HCT116 (cell line): ENCODE measurements at regions of chr4 and their contacts with region 1.

Region 1: DNA sequence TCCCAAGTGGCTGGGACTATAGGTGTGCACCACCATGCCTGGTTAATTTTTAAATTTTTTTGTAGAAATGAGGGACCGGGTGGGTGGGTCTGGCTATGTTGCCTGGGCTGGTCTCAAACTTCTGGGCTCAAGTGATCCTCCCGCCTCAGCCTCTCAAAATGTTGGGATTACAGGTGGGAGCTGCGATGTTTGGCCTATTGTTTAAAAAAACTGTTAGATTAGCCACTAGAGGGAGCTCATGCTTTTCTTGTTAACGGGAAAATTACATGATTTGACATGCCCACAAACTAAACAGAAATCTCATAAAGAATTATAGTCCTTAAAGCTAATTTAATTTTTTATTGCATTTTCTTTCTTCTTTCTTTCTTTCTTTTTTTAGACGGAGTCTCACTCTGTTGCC is 5.0 kb upstream of the SDAD1 start:
- DNase-seq: peak; percentile 42
- ATAC-seq: peak; percentile 48
- H3K4me3 ChIP-seq: no peak overlapping the region
- H3K27ac ChIP-seq: no peak overlapping the region
- H3K4me1 ChIP-seq: peaks cover 0 to 6% of the 10 kb centered on the region in 2 experiments; a peak in 2 of 4 replicates
- H3K27me3 ChIP-seq: no peaks in the 10 kb centered on the region
- CTCF ChIP-seq: peak; percentile 37 to 70 (median 60); a peak in 5 of 6 replicates
- POLR2A ChIP-seq: no peak
- RAD21 ChIP-seq: peak; percentile 80

Region 2: DNA sequence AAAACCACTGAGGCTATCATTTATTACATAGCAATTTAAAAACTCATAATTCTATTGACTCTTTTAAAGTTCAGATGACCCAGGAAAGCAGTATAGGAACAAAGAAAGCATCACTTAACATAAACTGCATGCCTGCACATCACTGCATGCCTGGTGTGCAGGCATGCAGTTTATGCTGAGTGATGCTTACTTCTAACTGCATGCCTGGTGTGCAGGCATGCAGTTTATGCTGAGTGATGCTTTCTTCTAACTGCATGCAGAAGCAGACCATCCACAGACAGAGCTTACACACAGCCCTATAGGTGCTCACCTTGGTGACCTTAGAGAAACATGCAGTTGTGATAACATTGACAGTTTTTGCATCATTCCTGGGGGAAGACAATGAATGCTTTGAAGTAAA is 22.0 kb before region 1 on chr4:
- CTCF ChIA-PET with region 1: no interaction called
- POLR2A ChIA-PET with region 1: no interaction called
- RAD21 ChIA-PET with region 1: no interaction called
- intact Hi-C with region 1: no loop called
- DNase-seq: no peak
- ATAC-seq: no peak
- H3K4me3 ChIP-seq: no peak overlapping the region
- H3K27ac ChIP-seq: no peak overlapping the region
- H3K4me1 ChIP-seq: no peaks in the 10 kb centered on the region
- H3K27me3 ChIP-seq: no peaks in the 10 kb centered on the region
- CTCF ChIP-seq: no peak
- POLR2A ChIP-seq: no peak
- RAD21 ChIP-seq: no peak

Region 3: DNA sequence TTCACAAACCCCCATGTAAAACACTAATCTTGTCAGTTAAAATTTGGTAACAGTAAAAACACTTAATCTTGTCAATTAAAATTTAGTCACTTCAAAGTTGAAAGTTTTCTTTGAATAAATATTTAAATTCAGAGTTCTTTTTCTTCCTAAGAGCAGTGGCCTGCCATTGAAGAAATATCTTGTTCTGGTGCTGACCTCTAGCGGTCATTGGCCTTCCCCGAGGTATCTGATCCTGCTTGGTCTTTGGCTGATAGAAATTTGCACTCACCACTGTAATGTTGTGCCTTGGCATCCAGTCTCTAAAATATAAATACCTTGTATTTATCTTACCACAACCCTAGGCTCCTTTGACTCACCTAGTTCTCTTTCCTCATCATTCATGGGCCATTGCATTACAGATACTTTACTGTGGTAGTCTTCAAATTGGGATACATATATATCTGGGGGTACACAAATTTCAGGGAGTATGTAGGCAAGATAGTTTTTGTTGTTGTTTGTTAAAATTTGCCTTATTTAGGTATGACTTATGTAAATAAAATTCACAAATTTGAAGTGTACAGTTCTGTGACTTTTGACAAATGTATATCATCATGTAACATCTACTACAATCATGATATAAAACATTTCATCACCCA is 72.0 kb after region 1 on chr4:
- CTCF ChIA-PET with region 1: interaction called, 8 read pairs
- POLR2A ChIA-PET with region 1: no interaction called
- RAD21 ChIA-PET with region 1: interaction called in 1 of 2 experiments, 3 read pairs
- intact Hi-C with region 1: loop called (anchors 1 kb)
- DNase-seq: peak; percentile 59
- ATAC-seq: peak; percentile 99
- H3K4me3 ChIP-seq: no peak overlapping the region
- H3K27ac ChIP-seq: no peak overlapping the region
- H3K4me1 ChIP-seq: no peaks in the 10 kb centered on the region
- H3K27me3 ChIP-seq: no peaks in the 10 kb centered on the region
- CTCF ChIP-seq: peak; percentile 78 to 85 (median 85)
- POLR2A ChIP-seq: no peak
- RAD21 ChIP-seq: peak; percentile 87

Region 4: GRCh38 chr4:76087007-76087769 is 91.5 kb after region 1 on chr4:
- CTCF ChIA-PET with region 1: interaction called, 37 read pairs
- POLR2A ChIA-PET with region 1: interaction called, 3 read pairs
- RAD21 ChIA-PET with region 1: interaction called in 1 of 2 experiments, 3 read pairs
- intact Hi-C with region 1: loop called (anchors 1 kb)
- DNase-seq: peak; percentile 62
- ATAC-seq: peak; percentile 99
- H3K4me3 ChIP-seq: no peak overlapping the region
- H3K27ac ChIP-seq: no peak overlapping the region
- H3K4me1 ChIP-seq: peaks cover 3 to 11% of the 10 kb centered on the region in 2 experiments; a peak in 3 of 4 replicates
- H3K27me3 ChIP-seq: no peaks in the 10 kb centered on the region
- CTCF ChIP-seq: peak; percentile 60 to 71 (median 67); a peak in 5 of 6 replicates
- POLR2A ChIP-seq: no peak
- RAD21 ChIP-seq: peak; percentile 80

Region 5: GRCh38 chr4:76326515-76326914 is 330.8 kb after region 1 on chr4:
- CTCF ChIA-PET with region 1: no interaction called
- POLR2A ChIA-PET with region 1: no interaction called
- RAD21 ChIA-PET with region 1: no interaction called
- intact Hi-C with region 1: no loop called
- DNase-seq: no peak
- ATAC-seq: no peak
- H3K4me3 ChIP-seq: no peak overlapping the region
- H3K27ac ChIP-seq: no peak overlapping the region
- H3K4me1 ChIP-seq: no peaks in the 10 kb centered on the region
- H3K27me3 ChIP-seq: no peaks in the 10 kb centered on the region
- CTCF ChIP-seq: no peak
- POLR2A ChIP-seq: no peak
- RAD21 ChIP-seq: no peak

Region 6: GRCh38 chr4:76504613-76505465 is 509.1 kb after region 1 on chr4:
- CTCF ChIA-PET with region 1: interaction called, 7 read pairs
- POLR2A ChIA-PET with region 1: no interaction called
- RAD21 ChIA-PET with region 1: no interaction called
- intact Hi-C with region 1: loop called (anchors 10 kb)
- DNase-seq: peak; percentile 57
- ATAC-seq: peak; percentile 81
- H3K4me3 ChIP-seq: no peak overlapping the region
- H3K27ac ChIP-seq: no peak overlapping the region
- H3K4me1 ChIP-seq: no peaks in the 10 kb centered on the region
- H3K27me3 ChIP-seq: no peaks in the 10 kb centered on the region
- CTCF ChIP-seq: peak; percentile 51 to 79 (median 74); a peak in 5 of 6 replicates
- POLR2A ChIP-seq: no peak
- RAD21 ChIP-seq: peak; percentile 89